ENCODE measurements at regions of chr7 and their contacts with region 1.

Region 1: DNA sequence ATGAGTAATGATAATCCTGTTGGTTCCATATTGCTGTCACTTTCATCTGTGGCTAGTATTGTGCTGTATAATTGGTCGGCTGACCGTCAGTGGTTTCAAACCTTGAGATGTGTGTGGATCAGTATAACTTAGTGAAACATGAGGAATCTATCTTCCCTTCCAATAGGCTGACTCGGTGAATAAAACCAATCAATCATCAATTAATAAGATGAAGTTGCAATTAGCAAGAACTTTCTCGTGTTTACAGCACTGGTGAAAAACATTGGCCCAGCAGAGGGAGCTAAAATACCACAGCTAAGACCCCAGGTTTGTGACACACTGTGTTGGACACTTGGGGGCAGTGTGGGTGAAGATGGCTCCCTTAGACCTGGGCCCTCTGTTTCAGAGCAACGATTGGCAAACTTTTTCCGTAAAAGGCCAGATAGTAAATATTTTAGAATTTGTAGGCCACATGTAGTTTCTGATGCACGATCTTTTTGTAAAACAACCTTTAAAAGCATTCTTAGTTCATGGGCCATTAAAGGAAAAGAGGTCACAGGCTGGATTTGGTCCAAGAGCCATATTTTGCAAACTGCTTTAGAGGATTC is 47.8 kb downstream of the STRA8 start:
- ATAC-seq: peak; percentile 71 to 95 (median 90)
- H3K4me3 ChIP-seq: no peak overlapping the region
- H3K27ac ChIP-seq: no peak overlapping the region
- H3K4me1 ChIP-seq: no peaks in the 10 kb centered on the region

Region 2: GRCh38 chr7:135023622-135024021 is 257.8 kb before region 1 on chr7:
- in situ Hi-C with region 1: no loop called
- ATAC-seq: no peak
- H3K4me3 ChIP-seq: no peak overlapping the region
- H3K27ac ChIP-seq: no peak overlapping the region
- H3K4me1 ChIP-seq: no peaks in the 10 kb centered on the region

Region 3: DNA sequence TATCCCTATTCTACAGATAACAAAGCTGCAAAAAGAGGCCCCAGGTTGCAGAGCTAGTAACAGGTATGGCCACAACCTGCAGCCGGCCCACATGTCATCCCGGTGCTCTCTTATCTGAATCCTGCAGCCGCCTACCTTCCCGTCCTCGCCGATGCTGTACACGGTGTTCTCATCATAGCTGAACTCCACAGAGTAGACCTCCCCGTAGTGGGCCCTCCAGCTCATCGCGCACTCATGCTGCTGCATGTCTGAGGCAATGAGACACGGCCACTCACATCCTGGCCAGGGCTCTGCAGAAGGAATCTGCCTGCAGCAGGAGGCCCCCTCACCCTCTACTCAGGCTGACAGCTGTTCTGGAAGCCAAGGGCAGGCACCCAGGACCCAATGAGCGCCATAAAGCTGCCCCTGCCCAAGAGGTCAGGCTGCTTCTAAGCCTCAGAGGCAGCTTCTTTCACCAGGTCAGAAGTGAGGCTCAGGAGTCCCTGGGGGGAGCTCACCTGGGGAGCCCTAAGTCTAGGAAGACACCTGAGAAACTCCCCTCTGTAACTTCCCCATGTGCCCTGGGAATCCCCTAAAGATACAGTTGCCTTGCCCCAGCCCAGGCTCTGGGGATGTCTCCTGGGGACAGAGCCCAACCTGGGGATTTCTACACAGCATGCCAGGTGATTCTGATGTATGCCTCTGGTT is 93.0 kb before region 1 on chr7:
- in situ Hi-C with region 1: no loop called
- ATAC-seq: no peak
- H3K4me3 ChIP-seq: no peak overlapping the region
- H3K27ac ChIP-seq: no peak overlapping the region
- H3K4me1 ChIP-seq: no peaks in the 10 kb centered on the region

Region 4: GRCh38 chr7:135385209-135385608 is 103.8 kb after region 1 on chr7:
- in situ Hi-C with region 1: loop called in 1 of 9 experiments (anchors 25 kb)
- ATAC-seq: peak in 1 of 8 experiments; percentile 15
- H3K4me3 ChIP-seq: no peak overlapping the region
- H3K27ac ChIP-seq: no peak overlapping the region
- H3K4me1 ChIP-seq: no peaks in the 10 kb centered on the region

Region 5: DNA sequence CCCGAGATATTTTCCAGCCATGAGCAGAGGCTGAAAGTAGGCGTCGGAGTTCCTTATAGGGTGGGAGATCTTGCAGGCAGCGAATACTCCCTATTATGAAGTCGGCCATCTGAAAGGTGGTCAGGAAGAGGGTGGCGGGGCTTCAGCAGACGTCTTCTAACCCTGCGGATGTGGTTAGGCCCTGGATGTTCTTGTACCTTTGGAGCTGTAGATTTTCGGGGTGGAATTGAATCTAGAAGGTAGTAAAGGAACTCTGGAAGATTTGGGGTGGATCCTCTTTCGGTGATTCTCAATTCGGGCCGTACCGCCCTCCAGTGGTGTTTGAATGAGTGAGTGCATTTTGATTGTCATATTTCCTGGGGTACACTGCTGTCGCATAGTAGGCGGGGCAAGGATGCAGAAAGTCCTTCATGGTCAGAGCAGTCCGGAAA is 276.9 kb after region 1 on chr7:
- in situ Hi-C with region 1: loop called in 1 of 9 experiments (anchors 25 kb)
- ATAC-seq: peak; percentile 52 to 66 (median 58)
- H3K4me3 ChIP-seq: peak overlapping the region; percentile 57 to 76 (median 64)
- H3K27ac ChIP-seq: peak overlapping the region; percentile 99 to 100
- H3K4me1 ChIP-seq: no peaks in the 10 kb centered on the region

Measured in motor neuron (in vitro differentiated cells).